ENCODE measurements at regions of chr11 and their contacts with region 1.

Region 1: DNA sequence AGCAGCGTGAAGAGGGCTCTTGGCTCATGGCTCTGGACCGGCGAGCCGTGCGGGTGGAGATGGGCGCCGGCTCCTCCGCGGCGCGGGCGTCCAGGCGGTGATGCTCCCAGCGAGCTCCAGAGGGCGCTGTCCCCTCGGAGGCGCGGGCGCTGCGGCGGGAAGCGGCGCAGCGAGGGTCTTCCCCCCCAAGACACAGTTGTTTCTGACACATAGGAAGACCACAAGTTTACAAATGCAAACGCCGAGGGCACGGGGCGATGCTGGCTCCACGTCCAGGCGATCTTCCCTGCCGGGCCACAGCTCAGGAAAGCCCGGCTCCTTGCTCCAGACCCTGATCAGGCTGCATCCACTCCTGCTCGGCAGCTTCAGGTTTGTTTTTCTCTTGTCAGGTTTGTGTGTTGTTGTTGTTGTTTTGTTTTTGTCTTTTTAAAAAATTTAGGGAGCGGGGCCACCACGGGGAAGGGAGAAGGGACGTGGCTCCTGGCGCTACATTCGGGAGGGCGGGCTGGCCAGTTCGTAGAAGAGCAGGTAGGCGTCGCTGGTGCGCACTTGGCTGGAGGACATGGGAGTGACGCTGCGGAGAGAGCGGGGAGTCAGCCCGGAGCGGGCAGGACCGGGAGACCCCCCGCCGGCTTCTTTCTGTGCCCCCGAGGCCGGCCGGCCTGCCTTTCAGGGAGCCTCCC is 10.0 kb upstream of the MFRP start:
- DNase-seq: peak; percentile 80
- ATAC-seq: peak; percentile 90
- H3K4me3 Mint-ChIP-seq: peak overlapping the region; percentile 77
- H3K27ac Mint-ChIP-seq: peak overlapping the region; percentile 41
- H3K4me1 Mint-ChIP-seq: peaks cover 8% of the 10 kb centered on the region
- H3K27me3 Mint-ChIP-seq: peaks cover 21% of the 10 kb centered on the region
- CTCF ChIP-seq: peak; percentile 100

Region 2: GRCh38 chr11:119339589-119340343 is 16.7 kb before region 1 on chr11:
- CTCF ChIA-PET with region 1: interaction called, 37 read pairs
- POLR2A ChIA-PET with region 1: interaction called, 3 read pairs
- intact Hi-C with region 1: no loop called
- DNase-seq: peak; percentile 51
- ATAC-seq: peak; percentile 15
- H3K4me3 Mint-ChIP-seq: peak overlapping the region; percentile 5
- H3K27ac Mint-ChIP-seq: no peak overlapping the region
- H3K4me1 Mint-ChIP-seq: peaks cover 47% of the 10 kb centered on the region
- H3K27me3 Mint-ChIP-seq: peaks cover 29% of the 10 kb centered on the region
- CTCF ChIP-seq: peak; percentile 94

Region 3: DNA sequence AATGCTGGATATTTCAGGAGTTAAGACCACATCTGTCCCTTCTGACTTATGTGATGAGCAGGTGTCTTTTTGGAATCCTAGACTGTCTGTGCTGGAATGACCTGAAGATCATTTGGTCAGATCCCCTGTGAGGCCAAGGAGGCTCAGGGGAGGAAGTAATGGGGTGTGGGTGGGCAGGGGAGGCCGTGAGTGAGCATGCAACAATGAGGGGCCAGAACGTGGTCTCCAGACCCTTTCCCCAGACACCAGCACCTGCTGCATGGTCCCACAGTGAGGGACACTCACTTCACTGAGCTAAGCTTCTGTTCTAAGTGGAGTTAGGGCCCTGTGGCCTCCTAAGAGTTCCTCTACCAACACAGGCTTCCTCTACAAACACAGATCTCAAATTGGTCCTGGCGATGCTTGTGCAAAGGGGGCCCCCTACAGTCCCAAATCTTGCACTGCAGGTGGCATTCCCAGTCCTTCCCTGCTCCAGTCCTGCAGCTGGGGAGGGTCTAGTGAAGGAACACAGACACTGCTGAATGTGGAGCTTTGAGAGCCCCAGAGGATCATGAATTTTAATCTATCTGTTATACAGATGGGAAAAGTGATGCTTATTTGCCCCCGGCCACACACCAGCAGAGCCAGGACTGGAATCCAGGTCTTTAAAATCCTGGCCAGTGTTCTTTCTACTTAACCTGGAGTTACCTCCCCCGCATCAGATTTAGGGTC is 17.6 kb after region 1 on chr11:
- CTCF ChIA-PET with region 1: interaction called, 241 read pairs
- POLR2A ChIA-PET with region 1: interaction called, 5 read pairs
- intact Hi-C with region 1: no loop called
- DNase-seq: peak; percentile 56
- ATAC-seq: peak; percentile 75
- H3K4me3 Mint-ChIP-seq: no peak overlapping the region
- H3K27ac Mint-ChIP-seq: no peak overlapping the region
- H3K4me1 Mint-ChIP-seq: peaks cover 7% of the 10 kb centered on the region
- H3K27me3 Mint-ChIP-seq: peaks cover 6% of the 10 kb centered on the region
- CTCF ChIP-seq: peak; percentile 91

Region 4: DNA sequence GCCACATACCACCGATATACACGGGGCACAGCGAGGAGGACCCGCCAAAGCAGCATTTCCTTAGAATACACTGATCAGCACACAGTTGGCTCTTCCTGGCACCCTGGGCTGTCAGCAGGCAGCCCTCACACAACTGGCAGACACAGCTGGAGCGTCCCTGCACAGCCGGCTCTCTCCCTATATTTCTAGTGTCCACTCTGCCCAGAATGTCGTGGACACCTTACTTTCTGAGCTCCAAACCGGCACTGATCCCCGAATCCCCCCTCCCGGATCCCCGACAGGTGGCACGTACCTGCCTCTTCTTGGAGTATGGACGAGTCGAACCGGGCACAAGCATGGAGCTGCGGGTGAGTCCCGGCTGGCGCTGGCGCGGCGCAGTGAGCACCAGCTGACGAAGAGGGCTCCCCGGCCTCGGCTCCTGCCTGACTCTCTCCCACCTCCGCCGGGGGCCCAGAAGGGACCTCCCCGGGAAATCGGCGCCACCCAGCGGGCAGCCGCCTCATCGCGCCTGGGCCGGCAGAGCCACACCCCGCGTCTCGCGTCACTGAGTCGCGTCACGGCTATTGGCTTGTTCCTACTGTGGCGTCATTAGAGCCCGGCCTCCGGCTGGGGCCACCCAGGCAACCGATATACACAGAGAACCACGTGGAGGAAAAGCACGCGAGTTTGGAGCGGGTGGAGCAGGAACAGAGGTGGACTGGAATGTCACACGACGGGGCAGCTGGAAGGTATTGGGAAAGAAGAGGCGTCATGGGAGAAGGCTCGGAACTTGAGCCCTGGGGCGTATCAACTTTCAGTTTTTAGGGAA is 24.9 kb after region 1 on chr11 and contains the start of gene USP2:
- CTCF ChIA-PET with region 1: interaction called, 241 read pairs
- POLR2A ChIA-PET with region 1: interaction called, 5 read pairs
- intact Hi-C with region 1: no loop called
- DNase-seq: peak; percentile 97
- ATAC-seq: peak; percentile 99
- H3K4me3 Mint-ChIP-seq: no peak within 1 kb of the TSS
- H3K27ac Mint-ChIP-seq: no peak within 1 kb of the TSS
- H3K4me1 Mint-ChIP-seq: peaks cover 7% of the 10 kb centered on the region
- H3K27me3 Mint-ChIP-seq: no peaks in the 10 kb centered on the region
- CTCF ChIP-seq: peak; percentile 88
- total RNA-seq, gene USP2: 0.61 to 0.96 TPM

Region 5: DNA sequence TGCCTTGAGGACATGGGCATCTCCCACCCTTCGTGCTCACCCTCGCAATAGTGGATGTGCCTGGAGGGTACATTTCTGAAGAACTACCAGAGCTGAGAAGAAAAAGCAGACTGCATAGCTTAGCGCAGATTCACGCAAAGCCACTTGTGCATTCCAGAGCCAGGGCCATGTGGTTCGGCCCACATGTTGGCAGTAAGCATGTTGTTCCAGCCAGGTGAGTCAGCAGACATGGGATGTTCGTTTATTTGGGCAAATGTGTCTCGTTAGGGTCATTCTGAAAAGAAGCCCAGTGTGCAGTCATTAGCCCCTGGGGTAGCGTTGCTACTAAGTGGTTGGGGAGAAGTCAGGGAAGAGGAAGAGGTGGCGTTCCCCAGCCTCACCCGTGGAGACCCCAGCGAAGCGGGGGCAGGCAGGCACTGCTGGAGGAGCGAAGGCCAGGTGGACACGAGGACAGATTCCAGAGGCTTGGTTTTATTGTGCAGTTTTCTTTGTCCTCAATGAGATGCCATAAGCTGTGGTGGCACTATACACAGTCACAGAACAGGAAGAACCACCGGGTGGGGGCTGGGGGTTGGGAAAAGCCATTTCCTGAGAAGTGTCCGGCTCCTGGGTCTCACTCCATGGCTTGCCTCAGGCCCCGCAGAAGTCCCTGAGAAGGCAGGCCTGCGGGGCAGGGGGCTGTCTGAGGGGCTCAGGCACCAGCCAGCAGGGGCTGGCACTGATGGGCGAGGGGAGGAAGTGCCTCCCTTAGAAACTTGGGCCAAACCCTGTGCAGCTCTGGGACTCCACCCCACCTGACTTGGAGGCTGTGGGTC is 61.4 kb after region 1 on chr11:
- CTCF ChIA-PET with region 1: no interaction called
- POLR2A ChIA-PET with region 1: no interaction called
- intact Hi-C with region 1: no loop called
- DNase-seq: no peak
- ATAC-seq: no peak
- H3K4me3 Mint-ChIP-seq: no peak overlapping the region
- H3K27ac Mint-ChIP-seq: no peak overlapping the region
- H3K4me1 Mint-ChIP-seq: peaks cover 9% of the 10 kb centered on the region
- H3K27me3 Mint-ChIP-seq: peaks cover 30% of the 10 kb centered on the region
- CTCF ChIP-seq: no peak

Region 6: DNA sequence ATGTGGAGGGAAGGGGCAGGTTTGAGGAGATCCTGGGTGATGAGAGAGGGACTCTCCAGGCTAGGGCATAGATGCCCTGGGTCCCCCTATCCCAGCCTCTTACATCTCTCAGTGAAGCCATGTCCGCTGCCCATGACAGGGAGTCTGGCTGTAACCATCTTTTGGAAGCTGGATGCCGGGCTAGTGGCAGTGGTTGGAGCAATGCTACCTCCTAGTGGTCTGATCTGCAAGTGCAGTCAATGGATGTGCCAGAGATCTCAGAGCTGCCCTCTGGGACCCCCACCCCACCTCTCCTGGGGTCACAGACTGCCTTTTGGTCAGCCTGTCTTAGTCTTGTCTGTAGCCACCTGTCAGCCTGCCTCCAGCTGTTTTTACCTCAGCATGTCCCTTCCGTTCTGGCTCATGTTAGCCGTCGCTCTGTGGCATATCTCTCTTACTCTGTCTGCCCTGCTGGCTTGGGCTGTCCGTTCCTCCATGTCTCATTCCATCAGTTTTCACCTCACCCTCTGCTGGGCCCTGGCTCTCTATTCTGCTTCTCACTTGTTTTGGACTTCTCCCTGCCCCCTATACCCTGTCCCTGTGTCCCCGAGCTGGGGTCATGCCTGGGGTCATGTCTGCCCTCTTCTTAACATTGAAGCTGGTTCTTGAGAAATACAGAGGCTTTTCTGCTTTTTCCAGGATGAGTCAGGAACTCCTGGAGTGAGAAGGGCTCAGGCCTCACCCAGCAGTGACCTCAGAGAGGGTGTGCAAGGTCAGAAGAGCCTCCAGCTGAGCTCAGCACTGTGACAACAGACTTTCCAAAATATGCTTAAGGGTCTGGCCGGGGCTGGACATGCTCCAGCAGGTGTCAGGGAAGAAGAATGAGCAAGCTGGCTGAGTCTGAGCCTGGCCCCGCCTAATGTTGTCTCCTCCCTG is 118.4 kb after region 1 on chr11:
- CTCF ChIA-PET with region 1: interaction called, 100 read pairs
- POLR2A ChIA-PET with region 1: no interaction called
- intact Hi-C with region 1: loop called (anchors 2 kb)
- DNase-seq: peak; percentile 72
- ATAC-seq: peak; percentile 91
- H3K4me3 Mint-ChIP-seq: no peak overlapping the region
- H3K27ac Mint-ChIP-seq: no peak overlapping the region
- H3K4me1 Mint-ChIP-seq: no peaks in the 10 kb centered on the region
- H3K27me3 Mint-ChIP-seq: peaks cover 19% of the 10 kb centered on the region
- CTCF ChIP-seq: peak; percentile 82

Region 7: GRCh38 chr11:119481021-119481666 is 124.7 kb after region 1 on chr11:
- CTCF ChIA-PET with region 1: interaction called, 100 read pairs
- POLR2A ChIA-PET with region 1: no interaction called
- intact Hi-C with region 1: no loop called
- DNase-seq: peak; percentile 80
- ATAC-seq: peak; percentile 87
- H3K4me3 Mint-ChIP-seq: no peak overlapping the region
- H3K27ac Mint-ChIP-seq: no peak overlapping the region
- H3K4me1 Mint-ChIP-seq: no peaks in the 10 kb centered on the region
- H3K27me3 Mint-ChIP-seq: peaks cover 6% of the 10 kb centered on the region
- CTCF ChIP-seq: peak; percentile 99